ENCODE measurements at regions of chr7 and their contacts with region 1.

Region 1: GRCh38 chr7:112481833-112482670 is 1.3 kb downstream of the LSMEM1 start:
- DNase-seq: no peak
- H3K4me3 Mint-ChIP-seq: no peak overlapping the region
- H3K27ac Mint-ChIP-seq: no peak overlapping the region
- H3K4me1 Mint-ChIP-seq: peaks cover 12% of the 10 kb centered on the region
- H3K27me3 Mint-ChIP-seq: no peaks in the 10 kb centered on the region

Region 2: GRCh38 chr7:110544194-110544593 is 1937.9 kb before region 1 on chr7:
- intact Hi-C with region 1: no loop called
- DNase-seq: no peak
- H3K4me3 Mint-ChIP-seq: no peak overlapping the region
- H3K27ac Mint-ChIP-seq: no peak overlapping the region
- H3K4me1 Mint-ChIP-seq: no peaks in the 10 kb centered on the region
- H3K27me3 Mint-ChIP-seq: peaks cover 2% of the 10 kb centered on the region

Region 3: DNA sequence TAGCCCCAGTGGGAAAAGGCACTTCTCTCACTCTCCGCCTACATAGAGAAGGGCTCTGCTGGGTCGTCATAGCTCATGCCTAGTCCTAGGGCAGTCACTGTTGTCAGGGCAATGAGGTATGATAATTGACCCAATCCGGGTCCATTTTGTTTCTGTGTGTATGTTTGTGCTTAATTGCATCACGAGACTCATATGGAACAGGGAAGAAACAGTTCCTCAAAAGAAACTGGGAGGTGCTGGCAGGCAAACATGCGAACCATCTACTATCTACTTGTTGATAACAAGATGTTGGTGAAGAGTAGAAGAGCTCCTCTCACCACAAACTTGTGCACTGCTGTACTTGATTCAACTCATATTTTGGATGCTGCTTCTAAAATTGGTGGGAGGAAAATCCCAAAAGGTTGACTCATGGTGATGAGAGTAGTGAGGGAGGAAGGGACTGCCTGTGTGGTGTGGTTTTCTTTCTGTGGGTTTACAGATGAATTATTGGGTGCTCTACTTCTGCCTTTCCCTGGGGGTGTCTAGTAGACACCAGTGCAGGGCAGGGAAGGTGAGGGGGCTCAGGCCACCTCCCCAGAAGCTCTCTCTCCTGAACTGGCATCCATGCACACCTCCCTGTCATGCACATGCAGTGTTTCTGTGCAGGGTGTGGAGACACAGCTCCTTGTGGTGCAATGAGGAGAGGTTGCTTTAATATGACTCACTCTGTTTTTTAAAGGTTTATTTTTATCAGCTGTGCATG is 28.1 kb after region 1 on chr7:
- intact Hi-C with region 1: loop called (anchors 2 kb)
- DNase-seq: no peak
- H3K4me3 Mint-ChIP-seq: peak overlapping the region; percentile 36
- H3K27ac Mint-ChIP-seq: peak overlapping the region; percentile 22
- H3K4me1 Mint-ChIP-seq: peaks cover 31% of the 10 kb centered on the region
- H3K27me3 Mint-ChIP-seq: peaks cover 2% of the 10 kb centered on the region

Region 4: GRCh38 chr7:112898432-112899290 is 416.6 kb after region 1 on chr7:
- intact Hi-C with region 1: loop called (anchors 5 kb)
- DNase-seq: peak; percentile 9
- H3K4me3 Mint-ChIP-seq: no peak overlapping the region
- H3K27ac Mint-ChIP-seq: no peak overlapping the region
- H3K4me1 Mint-ChIP-seq: no peaks in the 10 kb centered on the region
- H3K27me3 Mint-ChIP-seq: no peaks in the 10 kb centered on the region